ENCODE measurements at regions of chr16 and their contacts with region 1.

Region 1: DNA sequence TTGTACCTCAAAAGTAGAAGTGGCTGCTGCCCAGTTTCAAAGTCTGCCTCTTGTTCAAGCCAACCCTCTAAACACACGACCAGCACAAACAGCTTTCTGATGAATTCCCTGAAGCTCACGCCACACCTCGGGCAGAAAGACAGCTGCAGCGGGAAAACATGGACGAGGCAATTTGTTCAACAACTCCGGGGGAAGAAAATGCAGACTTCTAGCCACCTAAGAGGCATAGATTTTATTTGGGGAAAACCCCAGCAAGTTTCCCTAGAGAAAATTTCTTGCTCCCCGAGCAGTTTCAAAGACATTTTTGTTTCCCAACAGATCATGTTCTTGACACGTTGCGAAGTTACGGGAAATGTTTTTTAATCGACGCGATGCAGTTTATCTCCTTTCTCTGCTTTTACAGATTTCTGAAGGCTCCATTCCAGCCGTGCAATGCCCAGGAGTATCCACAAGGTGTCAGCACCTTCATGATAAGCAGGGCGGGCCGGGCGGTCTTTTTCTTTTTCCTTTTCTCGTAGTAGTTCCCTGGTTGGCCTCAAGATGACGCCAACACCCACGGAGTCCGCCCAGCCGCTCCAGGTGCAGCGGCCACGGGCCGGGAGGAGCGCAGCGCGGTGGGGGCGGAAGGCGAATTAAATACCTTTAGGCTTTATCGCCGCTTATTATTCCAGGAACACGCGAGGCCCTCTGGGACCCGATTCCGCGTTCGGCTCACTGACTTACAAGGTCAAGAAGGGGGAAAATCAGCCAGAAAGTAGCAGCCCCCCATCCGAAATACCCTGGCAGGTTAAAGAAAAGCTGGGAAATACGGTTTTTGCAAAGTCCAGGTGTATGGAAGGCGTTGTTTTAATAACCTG is 2.9 kb upstream of the FOXC2 start:
- DNase-seq: peak; percentile 92
- ATAC-seq: peak; percentile 100
- H3K4me3 ChIP-seq: peak overlapping the region in 2 of 5 experiments; percentile 37 to 53
- H3K4me3 Mint-ChIP-seq: peak overlapping the region; percentile 48
- H3K27ac ChIP-seq: no peak overlapping the region
- H3K27ac Mint-ChIP-seq: no peak overlapping the region
- H3K4me1 ChIP-seq: peaks cover 26 to 37% of the 10 kb centered on the region in 2 donors
- H3K4me1 Mint-ChIP-seq: peaks cover 22% of the 10 kb centered on the region
- H3K27me3 ChIP-seq: peaks cover 0 to 67% (median 29%) of the 10 kb centered on the region in 4 experiments
- H3K27me3 Mint-ChIP-seq: peaks cover 48% of the 10 kb centered on the region
- CTCF ChIP-seq: peak; percentile 100

Region 2: GRCh38 chr16:86509759-86510464 is 53.8 kb before region 1 on chr16:
- CTCF ChIA-PET with region 1: interaction called, 4 read pairs
- POLR2A ChIA-PET with region 1: no interaction called
- intact Hi-C with region 1: loop called (anchors 5 kb)
- DNase-seq: peak; percentile 47
- ATAC-seq: peak; percentile 23
- H3K4me3 ChIP-seq: peak overlapping the region in 4 of 5 experiments; percentile 42 to 68 (median 62)
- H3K4me3 Mint-ChIP-seq: peak overlapping the region; percentile 98
- H3K27ac ChIP-seq: no peak overlapping the region
- H3K27ac Mint-ChIP-seq: no peak overlapping the region
- H3K4me1 ChIP-seq: peaks cover 46 to 62% of the 10 kb centered on the region in 2 donors
- H3K4me1 Mint-ChIP-seq: peaks cover 35% of the 10 kb centered on the region
- H3K27me3 ChIP-seq: peaks cover 0 to 84% (median 54%) of the 10 kb centered on the region in 4 experiments
- H3K27me3 Mint-ChIP-seq: peaks cover 57% of the 10 kb centered on the region
- CTCF ChIP-seq: no peak

Region 3: DNA sequence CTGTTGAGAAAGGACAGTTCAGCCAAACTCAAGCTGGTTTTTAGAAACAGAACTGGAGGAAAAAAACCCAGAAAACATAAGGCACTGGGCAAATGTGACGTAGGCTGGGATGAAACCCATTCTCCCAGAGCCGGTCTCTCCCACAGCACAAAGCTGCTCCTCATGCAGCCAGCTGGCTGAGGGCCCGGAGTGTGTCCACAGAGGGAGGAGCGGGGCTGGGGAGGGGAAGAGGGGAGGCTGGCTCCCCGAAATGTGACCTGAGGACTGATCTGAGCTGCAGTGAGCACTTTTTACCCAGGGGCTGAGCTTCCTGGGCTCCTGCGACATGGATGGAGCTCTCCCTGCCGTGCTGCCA is 32.5 kb before region 1 on chr16:
- CTCF ChIA-PET with region 1: no interaction called
- POLR2A ChIA-PET with region 1: no interaction called
- intact Hi-C with region 1: no loop called
- DNase-seq: no peak
- ATAC-seq: no peak
- H3K4me3 ChIP-seq: no peak overlapping the region
- H3K4me3 Mint-ChIP-seq: no peak overlapping the region
- H3K27ac ChIP-seq: no peak overlapping the region
- H3K27ac Mint-ChIP-seq: no peak overlapping the region
- H3K4me1 ChIP-seq: no peaks in the 10 kb centered on the region
- H3K4me1 Mint-ChIP-seq: no peaks in the 10 kb centered on the region
- H3K27me3 ChIP-seq: no peaks in the 10 kb centered on the region
- H3K27me3 Mint-ChIP-seq: no peaks in the 10 kb centered on the region
- CTCF ChIP-seq: no peak

Region 4: GRCh38 chr16:87062569-87063442 is 499.1 kb after region 1 on chr16:
- CTCF ChIA-PET with region 1: interaction called, 30 read pairs
- POLR2A ChIA-PET with region 1: no interaction called
- intact Hi-C with region 1: no loop called
- DNase-seq: peak; percentile 58
- ATAC-seq: peak; percentile 41
- H3K4me3 ChIP-seq: peak overlapping the region in 2 of 5 experiments; percentile 10 to 54
- H3K4me3 Mint-ChIP-seq: no peak overlapping the region
- H3K27ac ChIP-seq: no peak overlapping the region
- H3K27ac Mint-ChIP-seq: peak overlapping the region; percentile 20
- H3K4me1 ChIP-seq: peaks cover 6 to 12% of the 10 kb centered on the region in 2 donors
- H3K4me1 Mint-ChIP-seq: peaks cover 26% of the 10 kb centered on the region
- H3K27me3 ChIP-seq: peaks cover 0 to 13% (median 2%) of the 10 kb centered on the region in 4 experiments
- H3K27me3 Mint-ChIP-seq: peaks cover 32% of the 10 kb centered on the region
- CTCF ChIP-seq: peak; percentile 63

Region 5: DNA sequence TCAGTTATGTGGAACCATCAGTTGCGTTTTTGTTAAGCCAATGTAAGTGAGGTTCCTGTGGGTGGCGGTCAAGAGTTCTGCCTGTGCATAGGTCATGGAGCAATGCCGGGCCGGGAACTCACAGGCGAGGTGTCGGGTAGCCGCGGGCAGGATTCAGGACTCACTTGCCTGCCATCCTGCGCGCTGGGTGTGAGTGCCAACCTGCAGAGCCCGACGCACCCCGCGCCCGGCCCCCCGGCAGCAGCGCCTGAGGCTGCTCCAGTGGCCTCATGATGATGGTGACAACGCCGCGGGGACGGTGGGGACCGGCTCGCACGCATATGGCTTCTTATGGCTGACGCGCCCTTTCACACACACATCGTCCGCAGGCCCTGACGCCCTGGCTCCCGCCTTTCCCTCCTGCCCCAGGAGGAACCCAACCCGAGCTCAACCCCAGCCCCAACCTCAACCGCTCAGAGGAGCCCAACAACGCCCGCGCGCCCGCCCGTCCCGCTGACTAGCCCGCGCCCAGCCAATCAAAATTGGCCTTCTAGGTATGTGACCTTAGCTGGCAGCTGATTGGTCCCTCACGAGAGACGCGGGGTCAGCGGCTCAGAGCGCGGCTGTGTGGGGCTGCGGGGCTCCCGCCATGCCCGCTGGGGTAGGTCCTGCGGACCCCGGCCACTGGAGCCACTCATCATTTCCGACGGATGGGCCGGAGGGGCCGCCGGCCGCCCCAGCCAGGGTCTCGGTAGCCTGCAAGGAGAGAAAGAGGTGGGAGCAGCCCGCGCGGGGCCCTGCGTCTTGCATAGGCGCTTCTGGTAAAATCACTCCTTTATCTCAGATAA is 753.4 kb after region 1 on chr16 and contains the start of gene C16orf95:
- CTCF ChIA-PET with region 1: no interaction called
- POLR2A ChIA-PET with region 1: interaction called, 4 read pairs
- intact Hi-C with region 1: loop called (anchors 5 kb)
- DNase-seq: peak; percentile 97
- ATAC-seq: peak; percentile 89
- H3K4me3 ChIP-seq: peak within 1 kb of the TSS; percentile 73 to 99 (median 94)
- H3K4me3 Mint-ChIP-seq: peak within 1 kb of the TSS; percentile 96
- H3K27ac ChIP-seq: peak within 1 kb of the TSS; percentile 64 to 84
- H3K27ac Mint-ChIP-seq: peak within 1 kb of the TSS; percentile 97
- H3K4me1 ChIP-seq: peaks cover 8 to 10% of the 10 kb centered on the region in 2 donors
- H3K4me1 Mint-ChIP-seq: peaks cover 12% of the 10 kb centered on the region
- H3K27me3 ChIP-seq: no peaks in the 10 kb centered on the region
- H3K27me3 Mint-ChIP-seq: no peaks in the 10 kb centered on the region
- CTCF ChIP-seq: peak; percentile 61
- total RNA-seq, gene C16orf95: 2.3 and 2.5 TPM in 2 replicates

Measured in B cell (primary cell).